WTC11 (cell line): ENCODE measurements at regions of chr11 and their contacts with region 1.

Region 1: DNA sequence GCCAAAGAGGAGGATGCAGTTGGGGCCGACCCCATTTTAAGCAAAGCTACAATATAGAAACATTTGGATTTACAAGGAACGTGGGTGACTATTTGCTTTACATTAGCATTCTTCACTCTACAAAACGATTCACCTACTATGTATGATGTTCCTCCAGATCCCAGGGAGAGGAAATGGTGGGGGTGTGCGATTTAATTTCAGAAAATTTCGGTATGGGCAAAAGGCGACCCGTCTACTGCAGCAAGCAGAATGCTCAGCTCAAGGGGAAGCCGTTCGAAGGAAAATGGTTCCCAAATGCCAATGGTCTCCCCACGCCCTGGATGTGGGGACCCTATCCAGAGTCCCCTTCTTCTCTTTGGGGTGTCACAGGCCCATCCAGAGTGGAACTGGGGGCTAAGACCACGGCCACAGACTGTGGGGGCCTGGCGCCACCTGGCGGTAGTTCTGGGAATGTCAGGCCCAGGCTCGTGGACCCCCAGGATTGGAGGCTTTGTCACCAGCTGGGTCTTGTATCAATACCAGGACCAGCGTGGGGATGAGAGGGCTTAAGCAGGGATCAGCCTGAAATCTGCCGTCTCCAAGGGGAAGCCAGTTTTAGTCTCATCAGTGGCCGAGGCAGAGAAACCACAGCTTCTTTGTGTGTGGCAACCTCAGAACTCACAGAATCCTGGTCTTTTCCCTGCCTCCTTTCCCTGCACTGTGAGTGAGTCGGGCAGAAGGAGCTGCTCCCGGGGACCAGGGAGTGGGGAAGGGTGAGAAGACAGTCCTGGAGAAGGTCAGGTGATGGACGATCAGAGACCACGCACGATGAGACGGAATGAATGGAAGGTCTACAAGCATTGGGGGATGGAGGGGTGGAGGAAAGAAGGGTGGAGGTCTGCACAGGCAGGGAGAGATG is 8.4 kb downstream of the LRRC10B start:
- DNase-seq: peak; percentile 85
- ATAC-seq: peak; percentile 43
- H3K4me3 Mint-ChIP-seq: peak overlapping the region; percentile 45
- H3K27ac Mint-ChIP-seq: peak overlapping the region; percentile 57; the same call in 1 of the 2 replicates
- H3K4me1 Mint-ChIP-seq: peaks cover 48% of the 10 kb centered on the region
- H3K27me3 Mint-ChIP-seq: peaks cover 9% of the 10 kb centered on the region; the same call in 1 of the 2 replicates
- CTCF ChIP-seq: peak; percentile 100

Region 2: DNA sequence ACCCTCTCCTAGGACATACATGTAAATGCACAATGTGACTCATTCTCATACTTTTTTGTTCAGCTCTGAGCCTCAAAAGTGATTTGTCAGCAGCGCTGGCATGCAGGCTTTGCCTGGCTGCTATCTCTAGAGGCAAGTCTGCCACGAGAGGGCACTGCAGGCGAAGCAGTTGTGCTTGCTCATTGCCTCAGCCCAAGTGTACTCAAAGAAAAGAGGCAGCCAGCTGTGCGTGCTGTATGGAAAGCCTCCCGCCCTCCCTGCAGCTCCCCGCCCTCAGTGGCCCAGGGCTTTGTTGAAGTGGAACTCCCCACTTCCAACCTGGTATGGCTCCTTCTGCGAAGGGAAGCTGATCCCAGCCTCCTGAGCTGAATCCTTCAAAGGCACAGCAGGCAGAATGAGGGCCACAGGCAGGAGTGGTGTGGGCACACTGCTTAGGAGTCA is 70.7 kb before region 1 on chr11:
- CTCF ChIA-PET with region 1: interaction called, 153 read pairs
- POLR2A ChIA-PET with region 1: interaction called, 6 read pairs
- DNase-seq: peak; percentile 95
- ATAC-seq: peak; percentile 93
- H3K4me3 Mint-ChIP-seq: no peak overlapping the region
- H3K27ac Mint-ChIP-seq: peak overlapping the region; percentile 82; the same call in 1 of the 2 replicates
- H3K4me1 Mint-ChIP-seq: no peaks in the 10 kb centered on the region
- H3K27me3 Mint-ChIP-seq: no peaks in the 10 kb centered on the region
- CTCF ChIP-seq: peak; percentile 47

Region 3: DNA sequence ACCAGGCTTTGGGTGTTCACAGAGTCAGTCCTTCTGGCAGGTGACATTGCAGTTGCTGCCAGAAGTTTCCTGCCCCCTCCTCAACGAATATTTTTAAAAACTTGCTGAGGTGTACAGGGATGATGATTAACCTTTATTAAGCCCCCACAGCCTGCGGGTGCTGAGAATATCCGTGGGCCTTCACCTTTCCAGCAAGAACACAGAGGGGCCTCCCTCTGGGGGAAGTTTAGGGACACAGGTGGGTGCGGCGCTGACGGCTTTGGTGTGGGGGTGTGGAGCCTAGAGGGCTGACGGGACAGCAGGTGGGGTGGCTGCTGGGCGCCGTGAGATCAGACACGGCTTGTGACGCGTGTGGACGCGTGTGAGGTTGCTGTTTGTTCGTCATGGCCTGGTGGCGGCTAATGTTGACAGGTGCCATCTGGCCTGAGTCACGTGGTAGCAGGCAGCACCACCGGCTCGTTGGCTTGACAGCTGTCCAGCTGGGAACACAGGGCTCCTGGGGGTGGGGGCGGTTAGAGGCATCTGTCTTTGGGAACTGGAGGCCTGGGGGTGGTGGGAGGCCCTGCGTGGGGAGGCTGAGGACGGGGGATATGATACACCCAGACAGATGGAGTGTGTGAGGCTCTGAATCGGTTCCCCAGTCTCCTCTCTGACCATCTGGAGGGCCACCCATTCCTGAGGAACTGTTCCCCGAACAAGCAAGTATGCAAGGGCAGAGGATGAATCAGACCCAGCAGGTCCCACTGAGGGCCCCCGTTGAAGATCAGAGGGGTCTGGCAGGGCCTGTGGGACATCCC is 20.9 kb before region 1 on chr11:
- CTCF ChIA-PET with region 1: interaction called, 552 read pairs
- POLR2A ChIA-PET with region 1: no interaction called
- DNase-seq: no peak
- ATAC-seq: no peak
- H3K4me3 Mint-ChIP-seq: no peak overlapping the region
- H3K27ac Mint-ChIP-seq: no peak overlapping the region
- H3K4me1 Mint-ChIP-seq: peaks cover 20% of the 10 kb centered on the region
- H3K27me3 Mint-ChIP-seq: no peaks in the 10 kb centered on the region
- CTCF ChIP-seq: no peak

Region 4: DNA sequence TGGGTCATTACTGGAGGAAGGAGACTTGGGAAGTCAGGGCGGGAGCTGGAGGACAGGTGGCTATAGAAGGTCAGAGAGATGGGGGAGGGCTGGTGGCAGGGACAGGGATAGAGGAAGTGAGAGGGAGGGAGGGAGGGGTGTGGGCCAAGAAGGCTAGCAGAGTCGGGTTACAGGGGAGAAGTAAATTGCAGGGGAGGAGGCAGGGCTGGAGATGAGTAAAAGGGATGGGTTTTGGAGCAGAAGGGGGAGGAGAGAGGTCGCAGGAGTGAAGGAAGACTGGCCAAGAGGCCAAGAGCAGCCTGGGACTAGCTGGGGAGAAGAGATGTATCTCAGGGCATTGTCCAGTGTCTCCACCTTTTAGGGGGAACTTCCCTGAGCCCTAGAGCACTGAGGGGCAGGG is 24.7 kb after region 1 on chr11:
- CTCF ChIA-PET with region 1: interaction called, 68 read pairs
- POLR2A ChIA-PET with region 1: no interaction called
- DNase-seq: peak; percentile 54
- ATAC-seq: peak; percentile 85
- H3K4me3 Mint-ChIP-seq: peak overlapping the region; percentile 22; the same call in 1 of the 2 replicates
- H3K27ac Mint-ChIP-seq: peak overlapping the region; percentile 60; the same call in 1 of the 2 replicates
- H3K4me1 Mint-ChIP-seq: peaks cover 47% of the 10 kb centered on the region
- H3K27me3 Mint-ChIP-seq: no peaks in the 10 kb centered on the region; the same call in 1 of the 2 replicates
- CTCF ChIP-seq: no peak

Region 5: GRCh38 chr11:61575886-61576861 is 59.2 kb after region 1 on chr11:
- CTCF ChIA-PET with region 1: interaction called, 14 read pairs
- POLR2A ChIA-PET with region 1: no interaction called
- DNase-seq: no peak
- ATAC-seq: no peak
- H3K4me3 Mint-ChIP-seq: no peak overlapping the region
- H3K27ac Mint-ChIP-seq: no peak overlapping the region
- H3K4me1 Mint-ChIP-seq: peaks cover 34% of the 10 kb centered on the region
- H3K27me3 Mint-ChIP-seq: peaks cover 21% of the 10 kb centered on the region
- CTCF ChIP-seq: no peak

Region 6: GRCh38 chr11:61598886-61599868 is 82.3 kb after region 1 on chr11:
- CTCF ChIA-PET with region 1: interaction called, 12 read pairs
- POLR2A ChIA-PET with region 1: no interaction called
- DNase-seq: peak; percentile 59
- ATAC-seq: peak; percentile 77
- H3K4me3 Mint-ChIP-seq: peak overlapping the region; percentile 38; the same call in 1 of the 2 replicates
- H3K27ac Mint-ChIP-seq: peak overlapping the region; percentile 60; the same call in 1 of the 2 replicates
- H3K4me1 Mint-ChIP-seq: peaks cover 44% of the 10 kb centered on the region
- H3K27me3 Mint-ChIP-seq: no peaks in the 10 kb centered on the region; the same call in 1 of the 2 replicates
- CTCF ChIP-seq: no peak